AG04450 (cell line): ENCODE measurements at regions of chr14 and their contacts with region 1.

Region 1: DNA sequence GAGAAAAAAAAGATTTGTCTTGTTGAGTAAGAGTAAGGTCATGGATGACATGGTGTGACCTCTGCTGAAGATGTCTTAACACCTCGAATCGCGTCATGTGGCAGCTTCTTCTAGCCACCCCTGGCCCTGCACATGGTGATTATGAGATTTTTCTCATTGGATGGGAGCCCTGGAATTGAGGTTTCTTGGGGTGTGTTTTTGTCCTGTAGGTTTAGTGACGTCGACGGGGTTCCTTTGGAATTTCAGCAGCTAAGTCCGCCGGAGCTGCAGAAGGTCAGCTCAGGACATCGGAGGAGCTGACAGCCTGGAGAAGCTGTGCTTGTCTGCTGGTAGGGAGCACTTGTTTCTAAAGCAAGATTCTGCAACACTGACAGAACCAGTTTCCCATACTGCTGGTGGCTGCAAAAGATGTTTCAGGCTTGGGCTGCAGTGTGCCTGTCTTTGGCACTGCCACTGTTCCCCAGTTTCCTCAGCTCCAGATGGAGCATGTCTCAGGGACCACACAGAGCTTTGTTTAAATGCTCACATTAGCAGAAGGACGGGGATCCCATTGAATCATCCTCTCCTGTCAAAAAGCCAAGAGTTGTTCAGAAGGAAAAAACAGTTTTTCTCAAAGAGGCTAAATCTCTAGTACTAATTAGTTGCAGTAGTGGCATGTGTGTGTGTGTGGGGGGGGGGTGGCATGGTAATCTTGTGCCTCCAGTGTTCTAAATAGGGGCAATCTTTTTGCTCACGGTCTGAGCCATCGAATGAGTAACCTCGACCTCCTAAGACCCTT is 5.2 kb upstream of the FOS start:
- DNase-seq: no peak
- H3K4me3 ChIP-seq: peak overlapping the region; percentile 21; the same call in 1 of the 2 replicates
- H3K27ac ChIP-seq: peak overlapping the region; percentile 78
- H3K27me3 ChIP-seq: no peaks in the 10 kb centered on the region
- CTCF ChIP-seq: no peak

Region 2: DNA sequence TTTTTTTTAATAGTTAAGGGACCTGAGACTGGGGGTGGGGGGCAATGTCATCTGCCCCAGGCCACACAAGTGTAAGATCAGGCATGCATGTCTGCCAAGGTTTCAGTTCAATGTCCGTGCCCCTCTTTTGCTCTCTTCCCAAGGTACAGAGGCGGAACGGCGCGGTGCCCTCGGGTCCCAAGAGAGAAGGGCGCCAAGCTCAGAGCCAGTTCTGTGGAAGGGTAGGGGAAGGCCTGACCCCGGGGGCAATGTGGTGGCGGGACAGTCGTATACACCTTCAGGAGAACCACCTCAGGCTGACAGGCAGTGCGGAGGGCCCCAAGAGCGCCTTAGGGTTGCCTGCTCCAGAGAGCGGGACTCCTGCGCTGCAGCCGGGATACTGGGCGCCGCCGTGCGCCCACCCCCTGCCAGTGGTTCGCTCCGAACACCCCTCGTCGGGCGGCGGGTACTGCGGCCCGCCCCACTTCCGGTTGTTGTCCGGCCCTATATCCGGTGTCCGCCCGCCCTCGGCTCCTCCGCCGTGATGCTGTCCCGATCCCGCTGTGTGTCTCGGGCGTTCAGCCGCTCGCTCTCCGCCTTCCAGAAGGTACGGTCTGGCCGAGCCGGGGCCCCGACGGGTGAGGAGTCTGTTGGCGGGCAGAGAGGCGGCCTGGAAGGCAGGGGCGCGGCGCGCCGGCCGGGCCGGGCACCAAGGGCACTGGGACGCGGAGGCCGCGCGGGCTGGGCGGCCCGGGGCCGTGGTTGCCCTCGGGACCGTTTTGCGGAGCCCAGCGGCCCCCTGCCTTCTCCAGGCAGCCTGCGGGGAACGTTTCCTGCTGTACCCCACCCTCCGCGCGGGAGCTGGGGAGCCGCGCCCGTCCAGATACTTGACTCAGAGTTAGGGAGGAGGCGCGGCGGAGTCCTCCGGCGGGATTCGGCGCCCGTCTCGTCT is 391.8 kb before region 1 on chr14 and contains the start of gene DLST:
- CTCF ChIA-PET with region 1: no interaction called
- POLR2A ChIA-PET with region 1: no interaction called
- DNase-seq: peak; percentile 66
- H3K4me3 ChIP-seq: peak within 1 kb of the TSS; percentile 86
- H3K27ac ChIP-seq: peak within 1 kb of the TSS; percentile 85
- H3K27me3 ChIP-seq: no peaks in the 10 kb centered on the region
- CTCF ChIP-seq: no peak
- polyA plus RNA-seq, gene DLST: 148 and 150 TPM in 2 replicates

Region 3: DNA sequence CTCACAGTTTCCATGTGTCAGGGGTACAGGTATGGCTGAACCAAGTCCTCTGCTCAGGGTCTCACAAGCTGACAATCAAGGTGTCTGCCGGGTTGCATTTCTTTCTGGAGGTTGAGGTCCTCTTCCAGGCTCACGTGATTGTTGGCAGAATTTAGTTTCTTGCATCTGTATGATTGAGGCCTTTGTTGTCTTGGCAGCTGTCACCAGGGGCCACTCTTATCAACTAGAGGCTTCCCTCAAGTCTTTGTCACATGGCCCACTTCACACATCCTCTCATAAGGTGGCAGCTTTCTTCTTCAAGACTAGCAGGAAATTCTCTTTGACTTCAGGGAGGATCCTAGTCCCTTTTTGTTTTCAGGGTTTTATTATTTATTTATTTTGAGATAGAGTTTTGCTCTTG is 40.9 kb before region 1 on chr14:
- CTCF ChIA-PET with region 1: no interaction called
- POLR2A ChIA-PET with region 1: no interaction called
- DNase-seq: no peak
- H3K4me3 ChIP-seq: no peak overlapping the region
- H3K27ac ChIP-seq: no peak overlapping the region
- H3K27me3 ChIP-seq: no peaks in the 10 kb centered on the region
- CTCF ChIP-seq: no peak

Region 4: DNA sequence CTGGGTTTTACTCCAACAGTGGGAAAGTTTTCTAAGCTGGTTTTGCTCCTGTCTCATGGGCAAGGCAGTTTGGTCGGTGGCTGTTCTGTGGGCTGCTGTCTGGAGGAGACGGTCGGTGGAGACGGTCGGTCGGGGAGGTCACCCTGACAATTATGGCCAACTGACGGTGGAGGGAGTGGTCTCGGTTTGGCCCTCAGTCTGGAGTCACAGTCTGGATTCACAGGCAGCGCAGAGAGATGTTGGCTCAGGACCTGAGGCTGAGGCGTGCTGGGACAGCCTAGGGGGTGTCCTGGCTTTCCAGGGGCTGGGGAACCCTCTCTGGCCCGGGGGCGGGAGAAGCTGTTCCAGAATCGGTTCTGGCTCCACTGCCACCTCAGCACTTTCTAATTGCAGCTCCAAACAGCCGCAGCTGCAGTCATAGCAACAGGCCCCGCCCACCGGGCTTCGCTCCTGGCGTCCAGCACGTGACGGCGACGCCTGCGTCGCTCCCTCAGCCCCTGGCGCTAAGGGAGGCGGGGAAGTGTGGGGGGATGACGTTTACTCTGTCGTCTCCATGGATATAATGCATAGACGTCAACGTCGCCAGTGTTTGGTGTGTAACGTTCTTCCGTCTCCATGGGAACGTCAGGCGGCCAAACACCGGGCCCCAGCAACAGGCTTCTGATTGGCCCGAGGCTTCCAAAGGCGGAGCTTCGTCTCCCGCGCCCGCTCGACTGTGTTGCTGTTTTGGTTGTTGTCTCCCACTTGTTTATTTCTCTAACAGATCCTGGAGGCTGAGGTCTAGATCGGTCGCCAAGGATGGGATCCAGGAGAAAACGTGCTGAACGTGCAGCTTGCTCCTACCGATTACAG is 14.6 kb before region 1 on chr14:
- CTCF ChIA-PET with region 1: interaction called, 3 read pairs
- POLR2A ChIA-PET with region 1: interaction called, 23 read pairs
- DNase-seq: peak; percentile 99
- H3K4me3 ChIP-seq: peak overlapping the region; percentile 65
- H3K27ac ChIP-seq: peak overlapping the region; percentile 97
- H3K27me3 ChIP-seq: peaks cover under 1% of the 10 kb centered on the region
- CTCF ChIP-seq: no peak

Region 5: GRCh38 chr14:75389679-75390078 is 116.2 kb after region 1 on chr14:
- CTCF ChIA-PET with region 1: no interaction called
- POLR2A ChIA-PET with region 1: no interaction called
- DNase-seq: no peak
- H3K4me3 ChIP-seq: no peak overlapping the region
- H3K27ac ChIP-seq: no peak overlapping the region
- H3K27me3 ChIP-seq: peaks cover 27% of the 10 kb centered on the region
- CTCF ChIP-seq: no peak

Region 6: DNA sequence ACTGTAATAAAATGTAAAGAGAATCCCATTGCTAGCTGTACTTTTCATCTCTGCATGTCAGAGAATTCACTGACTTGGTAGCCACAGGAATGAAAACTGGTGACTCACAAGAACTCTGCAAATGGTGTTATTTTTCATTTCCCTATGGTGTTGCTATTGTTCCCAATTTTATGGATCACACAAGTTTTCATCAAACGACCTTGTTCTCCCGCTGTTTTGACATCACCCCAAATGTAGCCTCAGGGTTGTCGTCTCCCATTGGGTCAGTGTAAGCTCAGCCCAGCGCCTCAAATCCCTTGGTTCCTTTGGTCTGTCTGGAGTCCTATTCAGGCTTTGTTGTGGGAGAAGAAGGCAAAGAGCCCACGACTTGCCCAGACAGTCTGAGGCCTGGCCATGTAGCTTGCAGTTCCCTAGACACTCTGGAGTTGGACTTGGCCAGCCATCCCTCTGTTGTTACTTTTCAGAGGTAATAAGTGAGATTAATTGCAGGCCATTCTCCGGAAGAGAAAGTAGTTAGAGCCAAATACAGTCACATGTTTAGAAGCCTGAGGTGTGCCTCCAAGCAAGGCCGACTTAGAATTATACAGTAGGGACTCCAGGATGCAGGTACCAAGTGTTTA is 549.2 kb after region 1 on chr14:
- CTCF ChIA-PET with region 1: no interaction called
- POLR2A ChIA-PET with region 1: no interaction called
- DNase-seq: peak; percentile 46
- H3K4me3 ChIP-seq: no peak overlapping the region
- H3K27ac ChIP-seq: peak overlapping the region; percentile 59
- H3K27me3 ChIP-seq: no peaks in the 10 kb centered on the region
- CTCF ChIP-seq: no peak